Aorta (tissue), 5 donors: ENCODE measurements at regions of chr10 and their contacts with region 1.

Region 1: GRCh38 chr10:14296065-14296709 is 34.5 kb downstream of the FRMD4A start:
- DNase-seq: peak in 1 of 2 donors; percentile 42
- ATAC-seq: peak; percentile 66
- H3K4me3 ChIP-seq: no peak overlapping the region
- H3K27ac ChIP-seq: no peak overlapping the region
- H3K4me1 ChIP-seq: peaks cover 2 to 3% of the 10 kb centered on the region in 2 donors
- H3K27me3 ChIP-seq: no peaks in the 10 kb centered on the region

Region 2: DNA sequence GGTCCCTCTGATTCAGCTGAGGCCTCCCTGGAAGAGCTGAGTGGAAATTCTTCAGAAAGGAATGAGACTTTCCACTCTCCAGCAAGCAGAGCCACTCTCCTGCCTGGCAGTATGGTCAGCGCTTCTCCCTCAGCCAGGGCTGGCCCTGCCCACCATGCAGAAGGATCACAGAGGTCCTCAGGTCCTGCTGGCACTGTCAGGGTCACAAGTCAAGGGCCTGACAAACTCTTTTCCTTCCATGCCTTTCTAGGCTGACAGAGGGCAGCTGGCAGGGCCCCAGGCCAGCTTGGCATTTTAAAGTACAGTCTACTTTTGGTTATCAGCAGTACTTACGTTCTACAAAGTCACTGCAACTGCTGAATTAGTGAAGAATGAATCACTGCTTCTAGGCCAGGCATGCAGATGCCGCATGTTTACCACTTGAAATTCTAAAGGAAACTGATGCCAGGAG is 153.9 kb after region 1 on chr10:
- intact Hi-C with region 1: loop called in 1 of 2 experiments (anchors 10 kb)
- DNase-seq: peak in 1 of 2 donors; percentile 51
- ATAC-seq: no peak
- H3K4me3 ChIP-seq: no peak overlapping the region
- H3K27ac ChIP-seq: no peak overlapping the region
- H3K4me1 ChIP-seq: no peaks in the 10 kb centered on the region
- H3K27me3 ChIP-seq: no peaks in the 10 kb centered on the region